ENCODE measurements at regions of chr3 and their contacts with region 1.

Region 1: DNA sequence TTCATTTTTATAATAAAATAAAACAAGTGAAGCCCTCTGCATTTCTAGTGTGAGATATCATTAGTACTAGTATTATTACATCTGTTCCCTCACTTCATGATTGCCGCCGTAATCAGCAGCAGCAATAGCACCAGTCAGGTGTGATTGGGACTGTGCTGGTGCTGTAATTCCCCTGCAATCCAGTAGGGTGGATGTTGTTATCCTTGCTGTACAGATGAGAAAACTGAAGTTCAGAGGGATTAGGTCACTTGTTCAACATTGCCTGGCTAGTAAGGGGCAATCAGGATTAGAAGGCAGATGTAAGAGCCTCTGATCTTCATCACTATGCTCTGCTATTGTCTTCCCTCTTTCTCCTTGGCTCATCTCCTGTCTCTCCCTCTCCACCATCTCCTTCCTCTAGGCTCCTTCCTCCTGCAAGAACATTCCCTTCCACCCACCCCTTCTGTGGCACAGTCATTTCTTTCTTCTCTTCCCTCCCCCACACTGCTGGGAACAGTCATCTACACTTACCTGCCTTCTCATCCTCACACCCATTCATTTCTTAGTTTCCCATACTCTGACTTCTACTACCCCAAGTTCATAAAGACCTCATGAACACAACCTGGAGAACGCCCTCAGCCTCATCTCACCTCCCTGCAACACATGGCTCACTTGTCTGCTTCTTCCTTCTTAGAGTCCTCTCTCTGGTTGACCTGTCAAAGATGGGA is 29.7 kb downstream of the CRYGS start:
- DNase-seq: peak; percentile 16
- H3K4me3 ChIP-seq: no peak overlapping the region
- H3K27ac ChIP-seq: no peak overlapping the region
- H3K4me1 ChIP-seq: peaks cover 14% of the 10 kb centered on the region
- H3K27me3 ChIP-seq: no peaks in the 10 kb centered on the region
- CTCF ChIP-seq: peak; percentile 52 to 56

Region 2: GRCh38 chr3:186413615-186414415 is 100.6 kb before region 1 on chr3:
- CTCF ChIA-PET with region 1: no interaction called
- dilution Hi-C with region 1: loop called (anchors 5 kb)
- in situ Hi-C with region 1: no loop called
- intact Hi-C with region 1: no loop called
- DNase-seq: peak; percentile 32
- H3K4me3 ChIP-seq: peak overlapping the region in 2 of 3 experiments; percentile 3 to 4
- H3K27ac ChIP-seq: no peak overlapping the region
- H3K4me1 ChIP-seq: peaks cover 53% of the 10 kb centered on the region
- H3K27me3 ChIP-seq: no peaks in the 10 kb centered on the region
- CTCF ChIP-seq: no peak

Region 3: DNA sequence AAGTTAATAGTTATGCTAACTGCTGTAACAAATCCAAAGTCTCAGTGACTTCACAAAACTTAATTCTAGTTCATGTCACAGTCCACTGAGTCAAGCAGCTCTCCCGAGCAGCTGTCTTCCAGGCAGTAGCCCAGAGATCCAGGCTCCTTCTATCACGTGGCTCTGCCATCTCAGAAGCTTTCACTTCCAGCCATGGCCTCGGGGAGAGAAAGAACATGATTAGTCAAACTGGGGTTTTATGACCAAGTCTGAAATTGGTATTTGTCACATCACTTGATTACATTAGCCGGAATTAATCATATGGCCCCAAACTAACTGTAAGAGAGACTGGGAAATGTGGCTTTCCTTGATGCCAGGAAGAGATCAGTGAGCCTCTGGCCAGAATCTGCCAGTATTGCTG is 82.3 kb before region 1 on chr3:
- CTCF ChIA-PET with region 1: no interaction called
- dilution Hi-C with region 1: no loop called
- in situ Hi-C with region 1: no loop called
- intact Hi-C with region 1: no loop called
- DNase-seq: peak; percentile 52
- H3K4me3 ChIP-seq: no peak overlapping the region
- H3K27ac ChIP-seq: no peak overlapping the region
- H3K4me1 ChIP-seq: no peaks in the 10 kb centered on the region
- H3K27me3 ChIP-seq: no peaks in the 10 kb centered on the region
- CTCF ChIP-seq: no peak

Region 4: DNA sequence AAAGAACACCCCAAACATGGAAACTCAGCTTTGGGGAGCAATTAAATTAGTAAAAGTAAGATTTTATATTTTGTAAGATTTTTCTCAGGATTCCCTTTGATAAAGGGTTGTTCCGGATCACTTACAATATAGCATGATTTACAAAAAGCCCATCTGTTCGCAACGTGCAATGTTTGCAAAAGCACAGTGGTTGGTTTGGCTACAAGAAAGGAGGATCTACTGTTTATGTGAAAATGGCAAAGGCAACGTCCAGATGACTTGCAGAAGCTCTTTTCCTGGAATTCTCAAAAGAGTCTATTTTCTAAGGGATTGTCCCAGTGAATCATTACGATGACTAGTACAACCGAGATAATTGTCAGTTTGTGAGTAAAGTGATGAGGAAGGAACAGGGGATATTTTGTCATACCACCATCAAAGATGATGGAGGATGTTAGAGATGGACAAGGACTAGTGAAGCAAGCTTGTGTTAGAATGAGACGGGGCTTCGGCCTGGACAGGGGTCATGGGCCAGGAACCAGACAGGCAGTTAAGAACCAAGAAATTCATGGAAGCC is 41.9 kb before region 1 on chr3:
- CTCF ChIA-PET with region 1: no interaction called
- dilution Hi-C with region 1: loop called (anchors 5 kb)
- in situ Hi-C with region 1: no loop called
- intact Hi-C with region 1: no loop called
- DNase-seq: no peak
- H3K4me3 ChIP-seq: no peak overlapping the region
- H3K27ac ChIP-seq: no peak overlapping the region
- H3K4me1 ChIP-seq: peaks cover 20% of the 10 kb centered on the region
- H3K27me3 ChIP-seq: peaks cover 2% of the 10 kb centered on the region
- CTCF ChIP-seq: no peak